ENCODE measurements at regions of chr10 and their contacts with region 1.

Region 1: GRCh38 chr10:60444494-60445064 is 54.9 kb upstream of the ANK3 start:
- DNase-seq: no peak

Region 2: DNA sequence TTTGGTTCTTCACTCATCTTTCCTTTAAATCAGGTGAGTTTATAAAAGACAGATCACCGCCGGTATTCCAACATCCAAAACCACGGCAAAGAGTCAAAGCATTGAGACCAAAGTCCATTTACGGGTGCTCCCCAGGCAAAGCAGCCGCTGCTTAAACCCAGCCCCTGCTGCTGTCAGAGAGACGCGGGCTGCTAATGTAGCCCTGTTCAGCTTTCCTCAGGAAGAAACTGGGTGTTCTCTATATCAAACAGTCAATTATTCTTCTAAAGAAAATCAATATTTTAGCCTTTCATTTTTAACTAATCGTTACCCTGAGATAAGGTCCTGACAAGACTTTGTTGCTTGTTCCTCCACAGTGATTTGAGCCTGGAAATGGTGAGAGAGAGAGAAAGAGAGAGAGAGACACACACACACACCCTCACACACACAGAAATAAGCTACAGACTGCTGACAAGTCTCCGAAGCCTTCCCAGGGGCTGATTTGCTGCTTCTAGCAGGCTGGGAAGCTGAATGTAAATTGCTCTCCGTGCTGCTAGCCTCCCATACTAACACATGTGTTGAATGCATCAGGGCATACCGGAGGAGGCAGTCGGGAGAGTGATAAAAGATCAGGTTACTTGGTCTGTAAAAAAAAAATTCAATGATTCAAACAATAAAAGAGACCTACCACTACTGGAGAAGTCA is 128.1 kb after region 1 on chr10:
- intact Hi-C with region 1: loop called (anchors 5 kb)
- DNase-seq: peak; percentile 32 to 91 (median 54)

Region 3: GRCh38 chr10:60611291-60611747 is 166.7 kb after region 1 on chr10:
- intact Hi-C with region 1: loop called (anchors 10 kb)
- DNase-seq: peak in 2 of 10 donors; percentile 53 to 54

Region 4: DNA sequence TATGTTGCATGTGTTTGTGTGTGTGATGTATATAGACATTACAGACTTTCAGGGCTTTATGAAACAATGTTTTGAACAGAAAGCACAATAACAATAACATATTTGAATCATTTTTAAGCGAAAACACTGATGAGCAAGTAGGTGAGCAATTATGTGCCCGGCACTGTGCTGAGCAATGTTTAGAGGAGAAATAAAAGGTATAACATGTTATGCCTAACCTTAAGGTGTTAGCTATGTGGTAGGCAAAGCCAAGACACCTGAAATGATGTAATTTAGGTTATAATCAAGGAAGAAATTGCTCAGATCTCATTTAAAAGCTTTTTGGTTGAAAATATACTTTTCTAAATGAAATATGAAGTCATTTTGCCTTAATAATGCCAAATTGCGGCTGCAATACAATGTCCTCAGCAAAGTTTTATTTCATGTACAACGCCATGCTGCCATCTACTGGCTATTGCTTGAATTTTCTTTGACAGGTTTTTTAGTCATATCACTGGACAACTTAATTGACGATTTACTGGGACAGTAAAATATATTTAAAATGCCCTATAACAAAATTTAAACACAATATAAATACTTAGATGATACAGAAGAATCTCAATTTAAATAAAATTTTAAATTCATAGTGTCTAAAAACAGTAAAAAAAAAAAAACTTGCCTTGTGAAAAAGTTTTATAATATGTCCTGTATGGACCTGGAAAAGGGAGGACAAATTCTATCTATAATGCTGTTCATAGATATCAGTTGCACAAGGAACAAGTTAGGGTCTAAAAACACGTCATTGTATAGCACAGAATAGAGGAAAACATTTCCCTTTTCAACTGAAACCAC is 202.6 kb after region 1 on chr10:
- intact Hi-C with region 1: loop called (anchors 1 kb)
- DNase-seq: peak in 2 of 10 donors; percentile 17 to 26

Region 5: DNA sequence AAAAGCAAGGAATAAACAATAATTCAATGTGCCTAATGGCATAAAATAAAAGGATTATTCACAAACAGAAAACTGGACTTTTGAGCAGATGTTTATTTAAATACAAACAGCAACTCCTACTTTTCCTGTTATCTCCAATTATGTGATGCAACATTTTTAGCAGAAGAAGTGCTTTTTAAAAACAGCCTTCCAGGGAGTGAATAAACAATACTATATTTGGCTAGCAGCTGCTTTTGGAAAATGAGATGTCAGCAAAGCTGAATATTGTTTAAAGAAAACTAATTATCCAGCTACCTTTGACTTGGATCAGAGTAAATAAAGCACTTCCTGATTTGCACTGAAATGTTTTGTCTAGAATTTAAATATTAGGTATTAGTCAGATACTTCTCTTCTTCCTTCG is 356.9 kb after region 1 on chr10:
- intact Hi-C with region 1: no loop called
- DNase-seq: no peak

Measured in posterior cingulate gyrus (tissue), 11 donors.